AG04450 (cell line): ENCODE measurements at regions of chr1 and their contacts with region 1.

Region 1: DNA sequence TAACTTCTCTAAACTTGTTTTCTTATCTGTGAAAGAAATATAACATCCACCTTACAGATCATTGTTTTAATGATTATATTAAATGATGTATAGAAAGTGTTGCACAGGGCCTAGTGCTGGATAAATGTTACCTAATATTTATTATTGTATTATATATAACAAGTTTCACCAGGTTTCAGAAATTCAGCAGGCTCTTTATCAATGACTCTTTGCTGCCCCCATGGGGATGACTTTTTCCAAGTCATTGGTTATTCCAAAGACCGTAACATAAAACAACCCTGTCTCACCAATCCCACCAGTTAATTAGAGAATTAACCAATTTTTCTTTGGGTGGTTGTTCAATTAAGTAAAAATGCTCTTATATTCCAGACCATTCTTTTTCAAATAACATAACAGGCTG is 7.3 kb upstream of the DEDD start:
- DNase-seq: no peak
- H3K4me3 ChIP-seq: no peak overlapping the region
- H3K27ac ChIP-seq: no peak overlapping the region
- H3K27me3 ChIP-seq: no peaks in the 10 kb centered on the region
- CTCF ChIP-seq: peak; percentile 66

Region 2: GRCh38 chr1:161071886-161072371 is 67.8 kb before region 1 on chr1:
- CTCF ChIA-PET with region 1: interaction called, 10 read pairs
- POLR2A ChIA-PET with region 1: no interaction called
- DNase-seq: no peak
- H3K4me3 ChIP-seq: no peak overlapping the region
- H3K27ac ChIP-seq: no peak overlapping the region
- H3K27me3 ChIP-seq: peaks cover 4% of the 10 kb centered on the region
- CTCF ChIP-seq: peak; percentile 52